Activated CD4-positive, alpha-beta memory T cell treated with anti-CD3 and anti-CD28 coated beads, Interleukin-2, amount 10 ng/mL, durations not matched to agents 7 days and 5 days (primary cell): ENCODE measurements at regions of chr17 and their contacts with region 1.

Region 1: GRCh38 chr17:75238684-75239191 is 22.7 kb downstream of the GGA3 start:
- DNase-seq: peak; percentile 67
- H3K4me3 Mint-ChIP-seq: peak overlapping the region; percentile 57
- H3K27ac Mint-ChIP-seq: peak overlapping the region; percentile 87
- H3K4me1 Mint-ChIP-seq: peaks cover 41% of the 10 kb centered on the region
- H3K27me3 Mint-ChIP-seq: no peaks in the 10 kb centered on the region

Region 2: DNA sequence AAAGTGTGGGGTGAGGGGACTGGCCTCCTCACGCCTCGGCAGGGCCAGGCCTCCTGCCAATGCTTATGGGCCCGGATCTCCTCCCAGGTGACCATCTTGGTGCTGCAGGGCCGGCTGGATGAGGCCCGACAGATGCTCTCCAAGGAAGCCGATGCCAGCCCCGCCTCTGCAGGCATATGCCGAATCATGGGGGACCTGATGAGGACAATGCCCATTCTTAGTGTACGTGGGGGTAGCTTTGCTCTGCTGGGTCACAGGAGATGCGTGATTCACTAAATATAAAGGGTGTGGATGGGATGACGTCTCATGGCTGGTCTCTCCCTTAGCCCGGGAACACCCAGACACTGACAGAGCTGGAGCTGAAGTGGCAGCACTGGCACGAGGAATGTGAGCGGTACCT is 13.7 kb before region 1 on chr17:
- CTCF ChIA-PET with region 1: interaction called, 13 read pairs
- POLR2A ChIA-PET with region 1: interaction called, 9 read pairs
- DNase-seq: no peak
- H3K4me3 Mint-ChIP-seq: no peak overlapping the region
- H3K27ac Mint-ChIP-seq: no peak overlapping the region
- H3K4me1 Mint-ChIP-seq: no peaks in the 10 kb centered on the region
- H3K27me3 Mint-ChIP-seq: no peaks in the 10 kb centered on the region

Region 3: DNA sequence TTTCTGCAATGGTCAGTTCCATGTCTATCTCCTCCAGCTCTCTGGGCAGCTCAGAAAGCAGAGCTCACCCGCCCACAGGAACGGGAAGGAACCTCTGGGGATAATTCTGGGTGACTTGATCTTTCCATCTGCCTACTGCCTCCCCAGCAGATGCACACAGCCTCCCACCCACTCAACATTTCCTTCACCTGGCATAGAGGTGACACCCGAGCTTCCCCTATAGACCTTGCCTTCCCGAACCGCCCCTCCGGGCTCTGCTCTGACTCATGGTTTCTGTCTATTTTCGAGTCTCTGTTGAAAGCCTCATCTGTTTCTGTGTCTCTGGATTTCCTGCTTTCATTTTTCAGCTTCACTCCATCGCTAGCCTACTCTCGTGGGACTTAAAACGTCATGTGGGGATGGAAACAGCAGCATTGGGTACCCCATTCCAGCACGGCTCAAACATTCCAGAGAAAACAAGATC is 11.3 kb after region 1 on chr17:
- CTCF ChIA-PET with region 1: interaction called, 16 read pairs
- POLR2A ChIA-PET with region 1: interaction called, 8 read pairs
- DNase-seq: peak; percentile 77
- H3K4me3 Mint-ChIP-seq: peak overlapping the region; percentile 73
- H3K27ac Mint-ChIP-seq: peak overlapping the region; percentile 86
- H3K4me1 Mint-ChIP-seq: peaks cover 40% of the 10 kb centered on the region
- H3K27me3 Mint-ChIP-seq: no peaks in the 10 kb centered on the region